Right ventricle myocardium superior (tissue), 1 donor: ENCODE measurements at regions of chr4 and their contacts with region 1.

Region 1: GRCh38 chr4:101187841-101188240 is 159.5 kb downstream of the PPP3CA start:
- DNase-seq: no peak
- ATAC-seq: no peak

Region 2: GRCh38 chr4:101334963-101335572 is 147.2 kb after region 1 on chr4:
- intact Hi-C with region 1: no loop called
- DNase-seq: no peak
- ATAC-seq: peak; percentile 48

Region 3: DNA sequence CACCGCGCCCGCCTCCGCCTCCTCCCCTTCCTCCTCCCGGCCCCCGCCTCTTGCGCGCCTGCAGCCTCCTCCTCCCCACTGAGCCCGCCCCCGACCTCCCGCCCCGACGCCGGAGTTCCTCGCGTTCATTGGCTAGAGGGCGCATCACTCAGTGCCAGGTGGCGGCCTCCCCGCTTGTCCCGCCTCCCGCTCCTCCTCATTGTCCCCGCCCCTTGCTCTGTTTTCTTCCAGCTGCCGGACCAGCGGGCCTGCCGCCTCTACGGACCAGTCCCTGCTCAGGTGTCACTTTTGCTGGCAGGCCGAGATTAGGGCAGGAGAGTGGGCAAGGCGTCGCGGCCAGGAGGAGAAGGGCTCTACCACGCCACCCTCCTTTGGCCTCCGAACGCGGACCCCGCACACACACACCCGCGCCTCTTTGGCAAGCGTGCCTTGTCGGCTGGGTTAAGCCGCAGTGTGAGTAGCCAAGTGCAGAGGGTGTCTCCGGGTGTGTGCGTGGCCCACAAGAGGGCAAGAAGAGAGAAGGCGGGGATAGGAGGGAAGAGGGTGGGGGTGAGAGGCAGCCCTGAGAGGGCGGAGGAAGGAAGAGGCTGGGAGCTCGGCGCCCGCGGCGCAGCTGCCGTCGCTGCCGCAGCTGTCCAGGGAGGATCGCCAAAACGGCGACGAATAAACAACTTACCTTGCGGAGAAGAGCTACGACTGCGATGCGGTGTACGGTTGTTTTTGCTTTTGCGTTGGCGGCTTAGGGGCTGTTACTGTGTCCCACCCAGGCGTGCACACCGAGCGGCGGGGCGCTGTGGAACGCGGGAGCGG is 159.9 kb after region 1 on chr4:
- intact Hi-C with region 1: loop called (anchors 5 kb)
- DNase-seq: peak; percentile 99
- ATAC-seq: peak; percentile 95